ENCODE measurements at regions of chr7 and their contacts with region 1.

Region 1: GRCh38 chr7:121384265-121384664 is 11.8 kb downstream of the FAM3C start:
- DNase-seq: no peak
- H3K4me3 ChIP-seq: no peak overlapping the region
- H3K27ac ChIP-seq: no peak overlapping the region
- H3K4me1 ChIP-seq: peaks cover 7% of the 10 kb centered on the region
- H3K27me3 ChIP-seq: no peaks in the 10 kb centered on the region
- CTCF ChIP-seq: no peak
- POLR2A ChIP-seq: no peak

Region 2: GRCh38 chr7:120628251-120628650 is 756.0 kb before region 1 on chr7:
- intact Hi-C with region 1: loop called (anchors 5 kb)
- DNase-seq: no peak
- H3K4me3 ChIP-seq: no peak overlapping the region
- H3K27ac ChIP-seq: no peak overlapping the region
- H3K4me1 ChIP-seq: no peaks in the 10 kb centered on the region
- H3K27me3 ChIP-seq: no peaks in the 10 kb centered on the region
- CTCF ChIP-seq: no peak
- POLR2A ChIP-seq: no peak